ENCODE measurements at regions of chr5 and their contacts with region 1.

Region 1: DNA sequence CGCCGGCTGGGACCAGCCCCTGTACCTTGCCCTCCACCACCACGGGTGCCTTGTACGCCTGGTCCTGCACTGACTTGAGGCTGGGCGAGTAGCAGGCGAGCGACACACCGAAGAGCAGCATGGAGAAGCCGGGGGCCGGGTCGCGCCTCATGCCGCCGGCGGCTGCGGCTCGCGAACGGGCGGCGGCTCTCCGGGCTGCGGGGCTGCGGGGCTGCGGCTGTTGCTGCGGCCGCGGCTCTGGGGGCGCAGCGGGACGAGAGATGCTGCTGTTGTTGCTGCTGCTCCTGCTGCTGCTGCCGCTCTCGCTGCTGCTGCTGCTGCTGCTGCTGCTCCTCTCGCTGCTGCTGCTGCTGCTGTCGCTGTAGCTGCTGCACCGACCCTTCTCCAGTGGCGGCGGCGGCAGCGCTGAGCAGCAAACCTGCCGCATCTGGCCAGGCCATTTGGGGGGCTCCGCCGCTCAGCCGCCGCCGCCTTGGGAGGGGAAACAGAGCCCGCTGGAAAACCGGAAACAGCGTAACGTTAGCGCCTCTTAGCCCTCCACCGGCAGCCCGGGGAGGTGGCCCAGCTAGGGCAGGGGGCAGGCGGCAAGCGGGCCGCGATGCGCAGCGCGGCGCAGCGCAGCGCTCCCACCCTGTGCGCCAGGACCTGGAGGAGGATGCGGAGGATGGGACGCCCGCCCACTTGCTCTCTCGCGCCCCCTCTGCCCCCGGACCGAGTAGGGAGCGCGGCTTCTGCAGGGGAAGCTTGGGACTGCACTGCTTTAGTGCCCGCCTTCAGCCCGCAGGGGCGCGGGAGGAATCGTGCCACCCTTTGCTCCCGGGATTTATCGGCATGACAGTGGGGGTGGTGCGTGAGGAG is at the start of gene NRG2:
- DNase-seq: peak; percentile 67 to 86
- ATAC-seq: peak; percentile 21 to 51
- H3K4me3 ChIP-seq: peak within 1 kb of the TSS; percentile 82 to 97 (median 87)
- H3K27ac ChIP-seq: peak within 1 kb of the TSS; percentile 98 to 99 (median 98)
- H3K4me1 ChIP-seq: peaks cover 22 to 29% of the 10 kb centered on the region in 2 donors
- H3K27me3 ChIP-seq: no peaks in the 10 kb centered on the region
- CTCF ChIP-seq: peak; percentile 68 to 84 (median 72)
- POLR2A ChIP-seq: peak; percentile 74 to 79
- total RNA-seq, gene NRG2: 10.3 to 28.8 (median 20.0) TPM

Region 2: DNA sequence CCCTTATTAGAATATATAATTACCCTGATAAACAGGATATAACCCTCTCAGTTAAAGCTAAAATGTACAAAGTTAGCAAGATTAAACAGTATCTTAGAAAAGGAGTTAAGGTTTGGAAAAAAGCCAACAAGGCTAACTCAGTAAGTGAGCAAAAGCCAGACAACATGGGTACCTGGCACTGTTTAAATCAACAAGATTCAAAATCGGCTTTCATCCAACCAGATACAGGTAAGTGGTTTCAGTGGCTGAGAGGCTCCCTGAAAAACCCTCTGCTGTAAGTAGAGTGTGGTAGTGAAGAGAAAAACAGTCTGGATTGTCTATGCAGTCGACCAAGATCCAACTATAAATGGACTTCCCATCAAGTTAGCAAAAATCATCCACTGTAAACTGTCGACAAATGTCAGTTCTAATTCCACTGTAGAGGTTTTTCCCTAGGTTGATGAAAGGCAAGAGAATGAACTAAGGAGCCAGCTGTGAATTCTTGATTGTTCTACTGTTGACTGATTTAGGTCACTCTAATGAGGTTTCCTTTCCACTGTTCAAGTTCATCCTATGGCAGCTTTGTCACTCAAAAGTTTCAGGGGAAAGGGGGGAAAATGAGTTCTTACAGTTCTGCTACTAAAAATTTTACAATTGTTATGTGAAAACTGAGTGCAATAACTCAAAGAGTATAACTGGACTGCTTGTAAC is 1527.2 kb before region 1 on chr5:
- in situ Hi-C with region 1: no loop called
- intact Hi-C with region 1: no loop called
- DNase-seq: no peak
- ATAC-seq: no peak
- H3K4me3 ChIP-seq: no peak overlapping the region
- H3K27ac ChIP-seq: no peak overlapping the region
- H3K4me1 ChIP-seq: peaks cover 0 to 10% of the 10 kb centered on the region in 2 donors
- H3K27me3 ChIP-seq: no peaks in the 10 kb centered on the region
- CTCF ChIP-seq: no peak
- POLR2A ChIP-seq: no peak

Region 3: DNA sequence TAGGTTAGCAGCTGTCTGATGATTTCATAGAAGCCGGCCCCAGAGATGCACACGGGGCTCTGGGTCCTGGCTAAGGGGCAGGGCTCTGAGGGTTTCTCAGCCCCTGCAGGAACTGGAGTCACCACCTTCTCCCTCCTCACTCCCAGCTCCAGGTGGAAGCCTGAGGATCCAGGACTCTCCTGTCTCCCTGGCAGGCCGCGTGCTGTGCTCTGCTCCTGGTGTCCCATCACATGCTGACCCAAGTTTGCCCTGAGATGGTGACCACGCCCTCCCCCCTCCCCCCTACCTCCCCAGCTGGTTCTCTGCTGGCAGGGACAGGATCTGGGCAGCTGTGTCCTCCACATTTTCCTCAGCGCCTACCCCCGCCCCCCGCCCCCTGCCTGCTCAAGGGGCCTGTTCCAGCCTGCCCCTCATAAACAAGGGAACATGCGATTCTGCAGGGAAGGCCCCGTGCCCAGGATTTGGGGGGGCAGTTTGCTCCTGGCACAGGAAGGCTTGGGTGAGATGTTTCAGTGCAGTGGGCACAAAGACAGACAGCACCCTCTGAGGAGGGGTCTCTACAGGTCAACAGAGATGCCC is 159.8 kb before region 1 on chr5:
- in situ Hi-C with region 1: no loop called
- intact Hi-C with region 1: loop called (anchors 10 kb)
- DNase-seq: peak; percentile 53 to 67
- ATAC-seq: peak; percentile 35 to 59
- H3K4me3 ChIP-seq: no peak overlapping the region
- H3K27ac ChIP-seq: peak overlapping the region in 1 of 4 donors; percentile 66
- H3K4me1 ChIP-seq: peaks cover 18 to 19% of the 10 kb centered on the region in 2 donors
- H3K27me3 ChIP-seq: no peaks in the 10 kb centered on the region
- CTCF ChIP-seq: no peak
- POLR2A ChIP-seq: no peak

Region 4: DNA sequence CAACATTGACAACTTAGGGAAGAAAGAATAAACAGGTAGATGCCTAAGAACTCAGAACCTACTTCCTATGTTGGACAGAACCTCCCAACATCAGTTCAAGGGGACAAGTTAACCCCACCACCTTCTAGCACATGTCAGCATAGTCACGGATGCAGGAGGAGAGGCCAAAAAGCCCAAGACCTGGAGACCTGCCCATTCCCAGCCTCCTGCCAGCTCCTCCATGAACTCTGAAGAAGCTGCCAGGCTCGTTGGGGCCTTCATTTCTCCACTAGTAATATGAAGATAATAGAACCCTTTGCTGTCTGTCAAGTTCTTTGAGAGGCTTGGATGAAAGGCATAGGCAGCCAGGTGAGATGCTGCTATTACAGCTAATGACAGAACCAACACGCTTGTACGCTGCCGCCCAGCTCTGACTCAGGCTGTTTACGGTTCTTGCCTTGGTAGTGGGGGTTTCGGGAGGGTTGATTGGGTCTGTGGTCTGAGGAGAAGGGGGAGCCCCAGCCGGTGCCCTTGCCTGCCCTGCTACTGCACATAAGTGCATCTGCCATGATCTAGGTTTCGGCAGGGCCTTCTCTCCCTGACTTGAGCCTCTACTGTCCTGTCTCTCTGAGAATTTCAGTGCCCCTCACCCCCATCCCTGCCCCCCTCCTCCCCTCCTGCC is 82.0 kb before region 1 on chr5:
- in situ Hi-C with region 1: no loop called
- intact Hi-C with region 1: no loop called
- DNase-seq: no peak
- ATAC-seq: no peak
- H3K4me3 ChIP-seq: no peak overlapping the region
- H3K27ac ChIP-seq: no peak overlapping the region
- H3K4me1 ChIP-seq: peaks cover 12 to 18% of the 10 kb centered on the region in 2 donors
- H3K27me3 ChIP-seq: no peaks in the 10 kb centered on the region
- CTCF ChIP-seq: no peak
- POLR2A ChIP-seq: no peak

Region 5: DNA sequence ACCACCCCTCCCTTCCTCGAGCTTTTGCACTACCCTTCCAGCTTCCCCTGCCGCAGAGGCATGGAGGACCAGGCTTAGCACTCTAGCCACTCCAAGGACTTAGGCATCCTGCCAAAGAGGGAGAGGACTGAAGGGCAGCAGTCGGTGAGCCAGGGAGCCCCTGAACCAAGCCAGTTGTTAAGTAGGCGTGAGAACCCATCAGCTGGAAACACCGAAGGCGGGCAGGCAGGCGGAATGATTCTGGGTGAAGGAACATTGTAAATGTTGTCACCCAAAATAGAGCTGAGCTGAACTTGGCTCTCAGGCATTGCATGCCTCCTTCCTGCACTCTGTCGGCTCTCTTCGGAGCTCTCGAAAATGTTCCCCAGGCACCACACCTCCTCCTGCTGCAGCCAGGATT is 42.5 kb before region 1 on chr5:
- in situ Hi-C with region 1: no loop called
- intact Hi-C with region 1: loop called (anchors 2 kb)
- DNase-seq: peak in 1 of 2 donors; percentile 34
- ATAC-seq: peak; percentile 63 to 80
- H3K4me3 ChIP-seq: peak overlapping the region in 3 of 4 donors; percentile 1 to 23 (median 19)
- H3K27ac ChIP-seq: peak overlapping the region; percentile 58 to 73 (median 64)
- H3K4me1 ChIP-seq: peaks cover 34 to 39% of the 10 kb centered on the region in 2 donors
- H3K27me3 ChIP-seq: no peaks in the 10 kb centered on the region
- CTCF ChIP-seq: no peak
- POLR2A ChIP-seq: no peak

Region 6: DNA sequence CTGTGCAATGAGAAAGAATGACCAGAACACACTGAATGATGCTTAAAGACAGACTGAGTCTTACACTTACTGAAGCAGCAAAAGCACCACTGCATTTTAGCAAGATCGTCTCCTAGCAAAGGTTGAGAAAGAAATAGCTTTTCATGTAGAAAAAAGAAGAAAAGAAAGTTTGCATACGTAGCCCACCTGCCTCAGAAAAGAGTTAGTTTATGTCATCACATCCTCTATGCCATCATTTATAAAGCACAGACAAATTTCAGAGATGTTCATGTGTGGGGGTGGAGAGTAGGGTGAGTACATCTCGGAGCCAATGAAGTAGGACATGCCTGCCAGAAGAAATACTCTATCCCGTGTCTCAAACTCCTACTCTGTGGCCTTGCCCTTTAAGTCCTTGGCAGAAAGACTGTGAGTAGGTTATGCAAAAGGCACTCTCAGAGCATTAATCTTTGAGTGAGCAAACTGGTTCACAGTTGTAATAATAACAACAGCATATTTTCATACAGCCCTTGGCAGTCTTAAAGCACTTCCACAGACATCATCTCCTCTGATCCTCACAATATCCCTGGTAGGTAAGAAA is 22.2 kb before region 1 on chr5:
- in situ Hi-C with region 1: no loop called
- intact Hi-C with region 1: loop called (anchors 2 kb)
- DNase-seq: peak; percentile 10 to 47
- ATAC-seq: peak; percentile 30 to 43
- H3K4me3 ChIP-seq: no peak overlapping the region
- H3K27ac ChIP-seq: peak overlapping the region; percentile 89 to 96 (median 94)
- H3K4me1 ChIP-seq: peaks cover 69 to 85% of the 10 kb centered on the region in 2 donors
- H3K27me3 ChIP-seq: no peaks in the 10 kb centered on the region
- CTCF ChIP-seq: no peak
- POLR2A ChIP-seq: no peak

Region 7: DNA sequence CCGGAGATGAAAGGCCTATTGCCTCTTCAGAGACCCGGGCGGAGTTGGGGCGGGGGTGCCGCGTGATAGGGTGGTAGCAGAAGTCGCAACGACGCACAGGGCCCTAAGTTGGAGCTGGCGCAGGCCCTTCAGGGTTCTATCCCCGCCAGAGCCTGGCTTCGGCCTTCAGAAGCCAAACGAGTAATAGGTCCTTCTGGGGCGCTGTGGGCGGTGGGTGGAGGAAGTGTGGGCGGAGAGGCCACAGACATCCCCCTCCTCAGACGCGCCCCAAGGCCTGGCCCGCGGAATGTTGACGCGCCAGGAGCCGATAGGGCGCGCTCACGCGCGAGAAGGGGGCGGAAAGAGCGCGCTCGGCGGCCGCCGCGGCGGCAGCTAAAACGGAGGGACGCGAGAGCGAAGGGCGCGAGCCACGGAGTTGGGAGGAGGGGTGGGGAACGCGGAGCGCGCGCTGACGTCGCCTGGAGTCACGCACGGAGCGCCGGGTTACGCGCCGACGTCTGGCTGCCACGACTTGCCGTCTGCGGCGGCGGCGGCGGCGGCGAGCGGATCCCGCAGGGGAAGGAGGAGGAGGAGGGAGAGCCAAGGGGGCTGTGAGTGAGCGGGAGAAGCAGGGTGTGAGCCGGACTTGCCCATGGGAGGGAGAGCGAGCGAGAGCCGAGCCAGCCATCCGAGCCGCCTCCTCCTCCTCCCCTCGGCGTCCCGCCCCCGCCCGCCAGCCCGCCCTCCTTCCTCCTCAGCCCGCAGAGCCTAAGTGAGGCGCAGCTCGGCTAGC is 64.6 kb after region 1 on chr5:
- in situ Hi-C with region 1: no loop called
- intact Hi-C with region 1: loop called (anchors 2 kb)
- DNase-seq: peak; percentile 88 to 92
- ATAC-seq: peak; percentile 94 to 96
- H3K4me3 ChIP-seq: peak overlapping the region; percentile 80 to 89 (median 84)
- H3K27ac ChIP-seq: peak overlapping the region; percentile 98 to 100 (median 98)
- H3K4me1 ChIP-seq: peaks cover 34 to 39% of the 10 kb centered on the region in 2 donors
- H3K27me3 ChIP-seq: no peaks in the 10 kb centered on the region
- CTCF ChIP-seq: peak in 4 of 5 experiments; percentile 21 to 37 (median 30)
- POLR2A ChIP-seq: peak; percentile 91 to 93

Region 8: GRCh38 chr5:140401362-140402257 is 358.7 kb after region 1 on chr5 and contains the start of gene ANKHD1:
- in situ Hi-C with region 1: no loop called
- intact Hi-C with region 1: no loop called
- DNase-seq: peak; percentile 99 to 100
- ATAC-seq: peak; percentile 89 to 92
- H3K4me3 ChIP-seq: peak within 1 kb of the TSS; percentile 80 to 100 (median 98)
- H3K27ac ChIP-seq: peak within 1 kb of the TSS; percentile 91 to 100 (median 98)
- H3K4me1 ChIP-seq: peaks cover 30 to 42% of the 10 kb centered on the region in 2 donors
- H3K27me3 ChIP-seq: no peaks in the 10 kb centered on the region
- CTCF ChIP-seq: no peak
- POLR2A ChIP-seq: peak; percentile 98 to 99
- total RNA-seq, gene ANKHD1: 51.3 to 93.6 (median 72.7) TPM

Measured in gastrocnemius medialis (tissue), 4 donors.